Common myeloid progenitor, CD34-positive (primary cell): ENCODE measurements at regions of chr3 and their contacts with region 1.

Region 1: DNA sequence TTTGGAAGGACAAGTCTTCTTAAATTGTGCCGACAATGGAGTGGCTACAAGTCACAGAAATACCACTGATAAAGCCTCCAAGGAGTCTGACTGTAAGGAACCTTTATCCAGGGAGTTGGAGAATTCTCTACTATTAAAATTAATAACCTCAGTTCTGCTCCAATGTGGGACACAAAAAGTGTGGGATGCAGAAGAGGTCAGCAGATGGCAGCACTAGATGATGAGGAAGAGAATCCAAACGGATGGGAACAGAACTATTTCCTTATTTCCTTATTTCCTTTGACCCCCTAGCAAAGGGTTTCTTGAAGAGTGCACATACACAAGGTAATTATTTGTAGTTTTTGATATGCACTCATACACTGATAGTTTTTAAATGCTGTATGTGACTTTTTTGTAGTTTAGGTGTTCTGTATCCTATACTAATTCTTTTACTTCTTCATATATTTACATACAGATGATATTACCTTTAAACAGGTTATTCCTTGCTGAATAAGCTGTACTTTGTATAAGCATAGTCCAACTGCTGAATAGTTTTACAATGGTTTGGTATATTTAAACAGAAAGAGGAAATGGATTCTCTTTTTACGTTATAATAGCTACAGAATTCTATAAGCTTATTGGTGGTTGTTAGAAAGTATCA is 25.6 kb upstream of the NLGN1 start:
- DNase-seq: peak; percentile 20 to 42 (median 32)
- H3K4me3 ChIP-seq: no peak overlapping the region
- H3K27ac ChIP-seq: no peak overlapping the region
- H3K4me1 ChIP-seq: no peaks in the 10 kb centered on the region
- H3K27me3 ChIP-seq: no peaks in the 10 kb centered on the region

Region 2: GRCh38 chr3:173395412-173396181 is 23.6 kb after region 1 on chr3:
- CTCF ChIA-PET with region 1: interaction called, 24 read pairs
- POLR2A ChIA-PET with region 1: no interaction called
- DNase-seq: peak; percentile 90 to 96 (median 93)
- H3K4me3 ChIP-seq: peak overlapping the region; percentile 61 to 91 (median 81)
- H3K27ac ChIP-seq: peak overlapping the region in 1 of 2 experiments; percentile 73
- H3K4me1 ChIP-seq: peaks cover 15 to 36% (median 35%) of the 10 kb centered on the region in 4 experiments
- H3K27me3 ChIP-seq: peaks cover 0 to 9% (median 3%) of the 10 kb centered on the region in 5 experiments

Region 3: DNA sequence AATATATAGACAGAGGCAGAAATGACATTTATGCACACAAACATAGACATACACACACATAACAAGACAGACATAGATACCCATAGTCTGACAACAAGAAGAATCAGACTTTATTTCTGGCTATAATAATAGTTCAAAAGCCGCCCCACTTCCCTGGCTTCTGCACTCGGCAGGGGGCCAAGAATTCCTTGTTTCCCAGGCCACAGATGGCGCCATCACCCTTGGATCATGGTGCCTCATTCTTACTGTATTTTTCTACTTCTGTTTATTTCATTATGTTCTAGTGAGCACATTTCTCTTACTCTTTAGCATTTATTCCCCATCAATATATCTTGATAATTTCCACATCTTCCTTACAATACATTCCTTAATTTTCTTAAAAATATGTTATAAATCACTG is 413.0 kb after region 1 on chr3:
- CTCF ChIA-PET with region 1: no interaction called
- POLR2A ChIA-PET with region 1: no interaction called
- DNase-seq: no peak
- H3K4me3 ChIP-seq: no peak overlapping the region
- H3K27ac ChIP-seq: no peak overlapping the region
- H3K4me1 ChIP-seq: no peaks in the 10 kb centered on the region
- H3K27me3 ChIP-seq: no peaks in the 10 kb centered on the region